T-cell (primary cell): ENCODE measurements at regions of chr2 and their contacts with region 1.

Region 1: GRCh38 chr2:216057688-216058193 is 23.9 kb downstream of the PECR start:
- DNase-seq: peak; percentile 39 to 80 (median 58)
- ATAC-seq: peak; percentile 98 to 99 (median 99)
- H3K4me3 ChIP-seq: peak overlapping the region; percentile 31 to 45
- H3K4me3 Mint-ChIP-seq: peak overlapping the region; percentile 68 to 79 (median 77)
- H3K27ac ChIP-seq: peak overlapping the region; percentile 97
- H3K27ac Mint-ChIP-seq: peak overlapping the region; percentile 97 to 100
- H3K4me1 ChIP-seq: peaks cover 8 to 10% of the 10 kb centered on the region in 2 experiments
- H3K4me1 Mint-ChIP-seq: peaks cover 21 to 40% (median 30%) of the 10 kb centered on the region in 3 donors
- H3K27me3 ChIP-seq: no peaks in the 10 kb centered on the region
- H3K27me3 Mint-ChIP-seq: no peaks in the 10 kb centered on the region

Region 2: GRCh38 chr2:215410932-215411285 is 646.8 kb before region 1 on chr2:
- CTCF ChIA-PET with region 1: interaction called in 1 of 2 experiments, 13 read pairs
- POLR2A ChIA-PET with region 1: no interaction called
- DNase-seq: no peak
- ATAC-seq: no peak
- H3K4me3 ChIP-seq: no peak overlapping the region
- H3K4me3 Mint-ChIP-seq: no peak overlapping the region
- H3K27ac ChIP-seq: no peak overlapping the region
- H3K27ac Mint-ChIP-seq: no peak overlapping the region
- H3K4me1 ChIP-seq: no peaks in the 10 kb centered on the region
- H3K4me1 Mint-ChIP-seq: no peaks in the 10 kb centered on the region
- H3K27me3 ChIP-seq: peaks cover 0 to 9% of the 10 kb centered on the region in 2 experiments
- H3K27me3 Mint-ChIP-seq: peaks cover 12 to 16% of the 10 kb centered on the region in 2 donors

Region 3: DNA sequence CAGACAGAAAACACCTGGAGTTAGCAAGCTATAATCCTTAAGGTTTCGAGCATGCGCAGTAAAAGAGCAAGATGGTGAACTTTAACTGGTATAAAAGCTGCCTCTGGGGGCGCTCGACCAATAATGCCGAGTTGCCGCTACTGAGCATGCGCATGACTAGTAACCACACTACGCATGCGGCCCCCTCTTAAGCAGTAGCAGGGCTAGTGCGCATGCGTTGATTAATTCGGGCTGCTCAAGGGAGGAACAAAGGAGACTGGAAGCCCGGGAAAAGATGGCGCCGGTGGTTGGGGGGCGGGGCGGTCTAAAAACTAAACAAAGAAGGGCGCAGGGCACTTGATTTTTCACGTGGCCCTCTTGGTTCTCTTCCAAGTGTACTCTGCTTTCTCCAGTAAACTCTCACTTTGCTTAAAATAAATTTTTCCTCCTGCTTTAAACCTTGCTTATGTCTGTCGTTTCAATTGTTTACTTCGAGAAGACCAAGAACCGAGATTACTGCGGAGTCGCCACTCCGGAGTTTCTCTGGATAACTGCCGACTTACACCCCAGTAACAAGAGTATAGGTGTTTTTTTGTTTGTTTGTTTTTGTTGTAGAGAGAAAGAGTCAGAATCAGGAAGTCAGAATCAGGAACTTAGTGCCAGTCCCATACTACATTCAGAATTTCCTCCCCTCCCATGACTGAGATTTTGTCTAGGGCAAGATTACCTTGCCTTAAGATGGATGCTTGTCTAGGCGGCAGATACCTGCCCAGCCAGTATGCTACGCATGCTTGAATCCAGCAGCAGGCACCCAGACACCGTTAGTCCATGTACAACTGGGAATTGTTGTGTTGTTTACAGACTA is 57.2 kb after region 1 on chr2:
- CTCF ChIA-PET with region 1: interaction called, 6 to 17 read pairs
- POLR2A ChIA-PET with region 1: interaction called in 1 of 2 experiments, 4 read pairs
- DNase-seq: peak; percentile 94 to 100 (median 96)
- ATAC-seq: peak; percentile 87 to 94 (median 91)
- H3K4me3 ChIP-seq: peak overlapping the region; percentile 50 to 58
- H3K4me3 Mint-ChIP-seq: peak overlapping the region; percentile 88 to 95 (median 93)
- H3K27ac ChIP-seq: peak overlapping the region; percentile 47
- H3K27ac Mint-ChIP-seq: peak overlapping the region; percentile 94 to 99
- H3K4me1 ChIP-seq: peaks cover 34 to 53% of the 10 kb centered on the region in 2 experiments
- H3K4me1 Mint-ChIP-seq: peaks cover 98 to 100% (median 98%) of the 10 kb centered on the region in 3 donors
- H3K27me3 ChIP-seq: no peaks in the 10 kb centered on the region
- H3K27me3 Mint-ChIP-seq: no peaks in the 10 kb centered on the region

Region 4: DNA sequence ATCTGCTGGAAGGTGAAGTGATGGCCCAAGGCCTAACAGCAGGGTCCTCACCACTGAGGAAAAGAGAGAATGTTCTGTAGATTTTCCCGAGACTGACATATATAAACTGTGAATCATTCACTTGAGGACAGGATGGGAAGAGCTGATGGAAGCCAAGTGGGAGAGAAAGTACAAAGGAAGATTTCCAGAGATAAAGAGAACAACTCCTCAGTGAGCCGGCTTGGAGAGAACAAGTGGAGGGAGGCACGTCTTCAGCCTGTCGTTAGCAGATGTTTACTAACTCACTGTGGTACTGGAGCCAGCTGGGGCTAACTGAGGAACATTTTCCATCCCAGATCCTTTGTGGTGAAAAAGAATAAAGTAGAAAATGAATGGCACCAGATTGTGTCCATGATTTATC is 1355.0 kb after region 1 on chr2:
- CTCF ChIA-PET with region 1: no interaction called
- POLR2A ChIA-PET with region 1: no interaction called
- DNase-seq: no peak
- ATAC-seq: no peak
- H3K4me3 ChIP-seq: no peak overlapping the region
- H3K4me3 Mint-ChIP-seq: no peak overlapping the region
- H3K27ac ChIP-seq: no peak overlapping the region
- H3K27ac Mint-ChIP-seq: no peak overlapping the region
- H3K4me1 ChIP-seq: no peaks in the 10 kb centered on the region
- H3K4me1 Mint-ChIP-seq: no peaks in the 10 kb centered on the region
- H3K27me3 ChIP-seq: peaks cover 0 to 2% of the 10 kb centered on the region in 2 experiments
- H3K27me3 Mint-ChIP-seq: peaks cover 2 to 10% of the 10 kb centered on the region in 2 donors